ENCODE measurements at regions of chr5 and their contacts with region 1.

Region 1: GRCh38 chr5:140372971-140373487 is 13.0 kb downstream of the SLC4A9 start:
- DNase-seq: peak; percentile 79
- H3K4me3 ChIP-seq: no peak overlapping the region
- H3K27ac ChIP-seq: peak overlapping the region in 5 of 8 donors; percentile 11 to 56 (median 37)
- H3K4me1 ChIP-seq: peaks cover 0 to 32% (median 12%) of the 10 kb centered on the region in 6 donors
- H3K27me3 ChIP-seq: no peaks in the 10 kb centered on the region
- CTCF ChIP-seq: peak; percentile 56 to 93 (median 84)
- POLR2A ChIP-seq: no peak

Region 2: GRCh38 chr5:140710899-140711552 is 338.0 kb after region 1 on chr5:
- intact Hi-C with region 1: loop called (anchors 10 kb)
- DNase-seq: peak; percentile 90
- H3K4me3 ChIP-seq: peak overlapping the region; percentile 52 to 84 (median 67)
- H3K27ac ChIP-seq: peak overlapping the region; percentile 84 to 96 (median 92)
- H3K4me1 ChIP-seq: peaks cover 0 to 19% (median 11%) of the 10 kb centered on the region in 6 donors
- H3K27me3 ChIP-seq: no peaks in the 10 kb centered on the region
- CTCF ChIP-seq: no peak
- POLR2A ChIP-seq: peak in 1 of 3 donors; percentile 15

Measured in spleen (tissue), 13 donors.